ENCODE measurements at regions of chr10 and their contacts with region 1.

Region 1: GRCh38 chr10:52818019-52818418 is 45.4 kb upstream of the MBL2 start:
- DNase-seq: peak; percentile 18
- ATAC-seq: peak; percentile 90
- H3K4me3 ChIP-seq: no peak overlapping the region
- H3K27ac ChIP-seq: no peak overlapping the region
- H3K4me1 ChIP-seq: no peaks in the 10 kb centered on the region
- H3K27me3 ChIP-seq: no peaks in the 10 kb centered on the region
- CTCF ChIP-seq: peak; percentile 81

Region 2: GRCh38 chr10:52883996-52884871 is 66.2 kb after region 1 on chr10:
- CTCF ChIA-PET with region 1: no interaction called
- POLR2A ChIA-PET with region 1: no interaction called
- in situ Hi-C with region 1: no loop called
- intact Hi-C with region 1: loop called (anchors 5 kb)
- DNase-seq: peak; percentile 61
- ATAC-seq: peak; percentile 96
- H3K4me3 ChIP-seq: peak overlapping the region; percentile 17 to 40; a peak in 3 of 4 replicates
- H3K27ac ChIP-seq: peak overlapping the region; percentile 74
- H3K4me1 ChIP-seq: peaks cover 7% of the 10 kb centered on the region
- H3K27me3 ChIP-seq: no peaks in the 10 kb centered on the region
- CTCF ChIP-seq: peak; percentile 93

Region 3: GRCh38 chr10:53886325-53887300 is 1068.6 kb after region 1 on chr10:
- CTCF ChIA-PET with region 1: interaction called, 11 read pairs
- POLR2A ChIA-PET with region 1: no interaction called
- in situ Hi-C with region 1: no loop called
- intact Hi-C with region 1: no loop called
- DNase-seq: no peak
- ATAC-seq: no peak
- H3K4me3 ChIP-seq: no peak overlapping the region
- H3K27ac ChIP-seq: no peak overlapping the region
- H3K4me1 ChIP-seq: peaks cover 3% of the 10 kb centered on the region; the same call in 1 of the 2 replicates
- H3K27me3 ChIP-seq: no peaks in the 10 kb centered on the region
- CTCF ChIP-seq: no peak